ENCODE measurements at regions of chr10 and their contacts with region 1.

Region 1: DNA sequence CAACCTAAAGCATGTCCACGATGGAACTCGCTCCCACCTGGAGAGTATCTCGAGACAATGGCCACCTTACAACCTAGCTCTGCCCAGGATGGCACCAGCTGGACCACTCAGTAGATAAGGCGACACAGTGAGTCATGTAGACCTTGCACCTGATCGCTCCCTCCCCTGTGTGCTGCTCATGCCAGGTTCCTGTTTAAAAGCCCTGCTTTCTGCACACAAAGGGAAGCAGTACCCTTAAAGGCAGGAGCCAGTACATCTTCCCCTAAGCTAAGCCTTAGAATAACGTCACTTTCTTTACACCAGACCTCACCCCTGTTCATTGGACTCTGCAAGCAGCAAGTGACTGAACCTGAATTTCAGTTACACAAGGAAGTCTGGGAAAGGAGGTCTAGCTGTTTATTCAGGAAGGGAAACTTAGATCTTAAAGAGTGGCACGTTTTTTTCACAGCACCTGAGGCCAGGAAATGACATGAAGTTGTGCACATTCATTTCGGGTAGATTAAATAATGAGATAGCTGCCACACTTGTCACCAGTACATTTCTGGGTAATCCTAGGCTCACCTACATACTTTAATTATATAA is 117.9 kb downstream of the MTPAP start:
- DNase-seq: no peak
- H3K4me3 Mint-ChIP-seq: no peak overlapping the region
- H3K27ac Mint-ChIP-seq: peak overlapping the region; percentile 61
- H3K4me1 Mint-ChIP-seq: peaks cover 22% of the 10 kb centered on the region
- H3K27me3 Mint-ChIP-seq: peaks cover 7% of the 10 kb centered on the region

Region 2: GRCh38 chr10:30034433-30035137 is 196.6 kb before region 1 on chr10:
- CTCF ChIA-PET with region 1: no interaction called
- POLR2A ChIA-PET with region 1: no interaction called
- DNase-seq: no peak
- H3K4me3 Mint-ChIP-seq: no peak overlapping the region
- H3K27ac Mint-ChIP-seq: no peak overlapping the region
- H3K4me1 Mint-ChIP-seq: peaks cover 23% of the 10 kb centered on the region
- H3K27me3 Mint-ChIP-seq: peaks cover 78% of the 10 kb centered on the region

Region 3: DNA sequence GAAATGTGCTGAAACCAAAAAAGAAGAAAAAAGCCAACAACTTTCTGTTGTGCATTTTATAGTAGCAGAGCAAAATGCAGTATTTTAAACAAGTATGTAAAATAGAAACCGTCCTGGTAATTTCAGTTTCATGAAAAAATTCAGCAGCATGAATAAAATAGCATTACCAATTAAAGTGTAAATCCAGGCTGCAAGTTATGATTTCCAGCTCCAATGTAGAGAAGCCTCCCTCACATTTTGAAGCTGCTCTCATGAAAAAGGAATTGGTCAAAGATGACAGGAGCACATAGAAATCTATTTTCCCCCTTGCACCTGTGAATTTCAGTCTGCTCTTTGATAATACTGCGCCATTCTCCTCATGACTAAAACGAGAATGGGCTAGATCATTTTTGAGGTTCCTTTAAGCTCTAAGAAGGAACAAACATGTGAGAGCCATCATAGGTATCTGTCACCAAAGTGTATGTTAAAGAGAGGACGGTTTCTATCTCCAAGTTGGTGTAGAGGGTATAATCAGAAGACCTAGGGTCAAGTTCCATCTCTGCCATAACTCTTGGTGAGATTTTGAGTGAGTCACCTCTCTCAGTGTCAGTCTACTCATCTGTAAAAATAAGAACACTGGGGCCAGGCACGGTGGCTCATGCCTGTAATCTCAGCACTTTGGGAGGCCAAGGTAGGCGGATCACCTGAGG is 10.4 kb after region 1 on chr10:
- CTCF ChIA-PET with region 1: interaction called, 21 read pairs
- POLR2A ChIA-PET with region 1: no interaction called
- DNase-seq: no peak
- H3K4me3 Mint-ChIP-seq: no peak overlapping the region
- H3K27ac Mint-ChIP-seq: no peak overlapping the region
- H3K4me1 Mint-ChIP-seq: no peaks in the 10 kb centered on the region
- H3K27me3 Mint-ChIP-seq: peaks cover 12% of the 10 kb centered on the region